GM12878 (cell line): ENCODE measurements at regions of chr6 and their contacts with region 1.

Region 1: DNA sequence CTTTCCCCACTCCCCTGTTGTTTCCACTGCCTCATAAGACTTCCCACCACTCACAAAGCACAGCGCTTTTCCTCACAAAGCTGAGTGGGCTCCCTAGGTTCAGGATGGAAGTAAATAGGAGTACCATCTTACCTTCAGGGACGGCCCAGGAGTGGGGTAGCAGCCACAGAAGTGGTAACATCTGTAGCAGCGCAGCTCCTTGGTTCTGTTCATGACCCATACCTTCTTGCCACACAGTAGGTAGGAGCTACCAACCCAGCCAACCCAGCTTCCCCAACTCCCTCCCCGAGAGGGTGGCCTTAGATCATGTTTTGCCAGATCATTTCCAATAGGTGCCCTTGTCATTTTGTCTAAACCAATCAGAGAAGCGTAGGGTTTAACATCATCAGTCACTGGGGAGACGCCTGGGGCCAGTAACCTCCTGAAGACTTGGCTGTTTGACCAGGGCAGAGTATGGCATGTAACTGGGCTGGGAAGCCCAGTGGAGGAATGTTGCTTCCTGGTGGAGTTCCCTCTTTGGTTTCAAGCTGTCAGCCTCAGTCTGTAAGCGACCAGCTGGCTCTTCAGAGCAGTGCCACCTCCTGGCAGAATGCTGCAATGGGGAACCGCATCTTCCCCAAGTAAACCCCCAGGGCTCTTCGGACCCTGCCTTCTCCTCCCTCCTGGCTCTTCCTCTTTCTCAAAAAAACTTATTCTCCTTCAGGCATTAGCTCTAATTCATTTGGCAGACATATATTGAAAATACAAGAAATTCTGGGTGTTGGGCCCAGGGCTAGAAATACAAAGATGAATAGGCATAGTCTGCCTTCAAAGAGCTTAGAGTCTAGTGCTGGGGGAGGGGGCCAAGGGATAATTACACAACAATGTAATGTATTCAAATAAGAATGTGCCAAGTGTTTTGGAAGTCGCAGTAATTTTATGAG is at the start of gene HLA-DMA:
- DNase-seq: peak; percentile 99
- ATAC-seq: peak; percentile 94
- H3K4me3 ChIP-seq: peak within 1 kb of the TSS; percentile 98
- H3K27ac ChIP-seq: peak within 1 kb of the TSS; percentile 90
- H3K4me1 ChIP-seq: peaks cover 44% of the 10 kb centered on the region
- H3K27me3 ChIP-seq: no peaks in the 10 kb centered on the region
- CTCF ChIP-seq: peak; percentile 71 to 77 (median 74)
- EP300 ChIP-seq: peak; percentile 32 to 67; a peak in 3 of 4 replicates
- POLR2A ChIP-seq: peak; percentile 98
- RAD21 ChIP-seq: peak; percentile 46
- polyA plus RNA-seq, gene HLA-DMA: 389 to 552 TPM

Region 2: GRCh38 chr6:32843979-32844838 is 108.9 kb before region 1 on chr6 and contains the start of gene PSMB8:
- CTCF ChIA-PET with region 1: interaction called, 25 read pairs
- POLR2A ChIA-PET with region 1: interaction called, 14 read pairs
- RAD21 ChIA-PET with region 1: interaction called, 20 read pairs
- SMC1A ChIA-PET with region 1: interaction called, 20 read pairs
- in situ Hi-C with region 1: no loop called
- intact Hi-C with region 1: no loop called
- DNase-seq: peak; percentile 98
- ATAC-seq: peak; percentile 75
- H3K4me3 ChIP-seq: peak within 1 kb of the TSS; percentile 96
- H3K27ac ChIP-seq: peak within 1 kb of the TSS; percentile 96
- H3K4me1 ChIP-seq: peaks cover 67% of the 10 kb centered on the region
- H3K27me3 ChIP-seq: no peaks in the 10 kb centered on the region
- CTCF ChIP-seq: no peak
- EP300 ChIP-seq: peak in 1 of 2 experiments; percentile 57; a peak in 1 of 4 replicates
- POLR2A ChIP-seq: peak; percentile 81
- RAD21 ChIP-seq: no peak
- polyA plus RNA-seq, gene PSMB8: 353 to 557 TPM

Region 3: GRCh38 chr6:32853541-32854375 is 99.3 kb before region 1 on chr6 and contains the starts of genes PSMB9 and TAP1:
- CTCF ChIA-PET with region 1: interaction called, 9 read pairs
- POLR2A ChIA-PET with region 1: interaction called, 17 read pairs
- RAD21 ChIA-PET with region 1: interaction called, 17 read pairs
- SMC1A ChIA-PET with region 1: interaction called, 8 read pairs
- in situ Hi-C with region 1: no loop called
- intact Hi-C with region 1: no loop called
- DNase-seq: peak; percentile 89
- ATAC-seq: peak; percentile 88
- H3K4me3 ChIP-seq: peak within 1 kb of the TSS; percentile 88
- H3K27ac ChIP-seq: peak within 1 kb of the TSS; percentile 100
- H3K4me1 ChIP-seq: peaks cover 32% of the 10 kb centered on the region
- H3K27me3 ChIP-seq: no peaks in the 10 kb centered on the region
- CTCF ChIP-seq: peak; percentile 79 to 84 (median 83)
- EP300 ChIP-seq: no peak
- POLR2A ChIP-seq: peak; percentile 83
- RAD21 ChIP-seq: peak; percentile 78
- polyA plus RNA-seq, gene PSMB9: 202 to 299 TPM
- polyA plus RNA-seq, gene TAP1: 33.4 to 60.0 TPM

Region 4: GRCh38 chr6:32885698-32886286 is 67.3 kb before region 1 on chr6:
- CTCF ChIA-PET with region 1: interaction called, 76 read pairs
- POLR2A ChIA-PET with region 1: interaction called, 4 read pairs
- RAD21 ChIA-PET with region 1: interaction called, 14 read pairs
- SMC1A ChIA-PET with region 1: interaction called, 12 read pairs
- in situ Hi-C with region 1: no loop called
- intact Hi-C with region 1: loop called (anchors 1 kb)
- DNase-seq: peak; percentile 23
- ATAC-seq: peak; percentile 83
- H3K4me3 ChIP-seq: no peak overlapping the region
- H3K27ac ChIP-seq: no peak overlapping the region
- H3K4me1 ChIP-seq: 0 out of 2 replicates have a peak, but pooled peaks cover 3% of the 10 kb centered on the region
- H3K27me3 ChIP-seq: no peaks in the 10 kb centered on the region; a peak in 1 of 4 replicates
- CTCF ChIP-seq: peak; percentile 38 to 61 (median 43); a peak in 5 of 6 replicates
- EP300 ChIP-seq: no peak
- POLR2A ChIP-seq: no peak
- RAD21 ChIP-seq: peak; percentile 83

Region 5: DNA sequence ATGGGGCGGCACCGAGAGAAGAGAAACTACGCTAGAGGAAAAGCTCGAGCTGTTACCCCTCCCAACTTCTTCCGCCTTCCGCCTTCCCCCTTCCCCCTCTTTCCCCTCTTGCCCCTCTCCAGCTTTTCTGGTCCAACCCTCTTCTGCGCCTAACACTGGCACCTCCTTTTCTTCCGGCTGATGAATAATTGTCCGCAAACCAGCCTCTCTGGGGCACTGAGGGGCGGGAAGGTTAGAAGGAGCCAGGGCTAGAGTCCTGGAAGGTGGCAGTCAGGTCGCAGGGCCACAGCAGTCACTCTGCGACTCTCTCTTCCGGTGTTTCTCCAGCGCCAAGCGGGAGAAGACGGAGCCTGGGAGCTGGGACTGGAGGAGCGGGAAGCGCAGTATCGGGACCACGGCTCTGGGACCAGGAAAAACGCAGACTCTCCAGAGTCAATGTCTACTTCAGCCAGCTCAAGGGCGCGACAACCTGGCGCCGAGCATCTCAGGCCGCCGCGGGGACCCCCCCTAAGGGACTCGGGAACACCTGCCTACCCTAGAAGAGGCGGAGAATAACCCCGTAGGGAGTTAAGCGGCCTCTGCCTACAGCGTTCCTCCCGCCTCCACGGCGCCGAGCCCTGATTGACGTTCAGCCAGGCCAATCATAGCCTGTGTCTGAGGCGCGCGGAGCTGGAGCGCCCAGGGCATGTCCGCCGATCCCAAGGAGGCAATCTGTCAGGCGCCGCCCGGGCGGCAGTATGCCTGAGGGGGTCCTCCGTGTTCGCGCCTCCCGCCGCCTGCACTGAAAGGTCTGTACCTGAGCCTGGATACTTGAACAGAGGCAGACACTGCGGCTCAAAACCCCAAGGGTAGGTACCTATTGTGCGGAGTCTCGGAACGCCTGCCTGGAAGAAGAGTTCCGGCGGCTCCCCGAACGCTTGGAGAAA is 58.7 kb before region 1 on chr6:
- CTCF ChIA-PET with region 1: interaction called, 31 read pairs
- POLR2A ChIA-PET with region 1: interaction called, 20 read pairs
- RAD21 ChIA-PET with region 1: interaction called, 19 read pairs
- SMC1A ChIA-PET with region 1: interaction called, 19 read pairs
- in situ Hi-C with region 1: no loop called
- intact Hi-C with region 1: no loop called
- DNase-seq: peak; percentile 91
- ATAC-seq: peak; percentile 98
- H3K4me3 ChIP-seq: peak overlapping the region; percentile 81
- H3K27ac ChIP-seq: peak overlapping the region; percentile 90
- H3K4me1 ChIP-seq: peaks cover 12% of the 10 kb centered on the region
- H3K27me3 ChIP-seq: no peaks in the 10 kb centered on the region
- CTCF ChIP-seq: no peak; a peak in 1 of 6 replicates
- EP300 ChIP-seq: no peak
- POLR2A ChIP-seq: peak; percentile 83
- RAD21 ChIP-seq: no peak

Region 6: DNA sequence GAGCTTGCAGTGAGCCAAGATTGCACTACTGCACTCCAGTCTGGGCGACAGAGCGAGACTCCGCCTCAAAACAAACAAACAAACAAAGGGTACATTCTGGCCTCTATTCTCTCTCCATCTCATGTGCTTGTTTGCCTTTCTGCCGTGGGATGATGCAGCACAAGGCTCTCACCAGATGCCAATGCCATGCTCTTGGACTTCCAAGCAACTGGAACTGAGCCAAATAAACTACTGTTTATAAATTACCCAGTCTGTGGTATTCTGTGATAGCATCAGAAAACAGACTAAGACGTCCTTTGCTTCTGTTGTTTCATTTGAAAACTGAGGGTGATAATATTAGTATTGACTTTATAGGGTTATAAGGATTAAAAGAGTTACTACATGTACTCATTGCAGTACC is 11.7 kb after region 1 on chr6:
- CTCF ChIA-PET with region 1: interaction called, 243 read pairs
- POLR2A ChIA-PET with region 1: interaction called, 486 read pairs
- RAD21 ChIA-PET with region 1: interaction called, 224 read pairs
- SMC1A ChIA-PET with region 1: interaction called, 347 read pairs
- in situ Hi-C with region 1: no loop called
- intact Hi-C with region 1: no loop called
- DNase-seq: no peak
- ATAC-seq: no peak
- H3K4me3 ChIP-seq: no peak overlapping the region
- H3K27ac ChIP-seq: no peak overlapping the region
- H3K4me1 ChIP-seq: peaks cover 8% of the 10 kb centered on the region
- H3K27me3 ChIP-seq: no peaks in the 10 kb centered on the region
- CTCF ChIP-seq: no peak
- EP300 ChIP-seq: no peak
- POLR2A ChIP-seq: no peak
- RAD21 ChIP-seq: no peak